Activated CD4-positive, alpha-beta T cell treated with anti-CD3 and anti-CD28 coated beads, Interleukin-2, amount 10 ng/mL, durations not matched to agents 24 days and 14 days (primary cell): ENCODE measurements at regions of chr3 and their contacts with region 1.

Region 1: DNA sequence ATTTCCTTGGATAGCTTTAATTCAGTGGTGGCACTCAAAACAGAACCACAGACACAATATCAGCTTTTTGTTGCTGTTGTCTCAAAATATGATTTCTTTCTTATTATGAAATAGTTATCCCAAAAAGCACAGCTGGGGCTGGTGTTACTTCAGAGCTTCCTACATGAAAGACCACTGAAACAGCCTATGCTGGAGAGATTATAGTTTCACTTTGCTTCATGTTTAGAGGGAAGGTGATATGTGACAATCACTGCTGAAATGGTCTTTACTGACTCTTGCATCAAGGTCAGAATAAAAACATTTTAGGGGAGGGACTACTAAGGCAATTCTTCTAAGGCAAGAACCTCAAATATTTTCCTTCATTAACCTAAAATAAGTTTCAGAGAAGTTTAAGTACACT is 190.7 kb downstream of the TNIK start:
- DNase-seq: peak; percentile 61
- H3K4me3 Mint-ChIP-seq: peak overlapping the region; percentile 56
- H3K27ac Mint-ChIP-seq: peak overlapping the region; percentile 13
- H3K4me1 Mint-ChIP-seq: peaks cover 67% of the 10 kb centered on the region
- H3K27me3 Mint-ChIP-seq: no peaks in the 10 kb centered on the region

Region 2: DNA sequence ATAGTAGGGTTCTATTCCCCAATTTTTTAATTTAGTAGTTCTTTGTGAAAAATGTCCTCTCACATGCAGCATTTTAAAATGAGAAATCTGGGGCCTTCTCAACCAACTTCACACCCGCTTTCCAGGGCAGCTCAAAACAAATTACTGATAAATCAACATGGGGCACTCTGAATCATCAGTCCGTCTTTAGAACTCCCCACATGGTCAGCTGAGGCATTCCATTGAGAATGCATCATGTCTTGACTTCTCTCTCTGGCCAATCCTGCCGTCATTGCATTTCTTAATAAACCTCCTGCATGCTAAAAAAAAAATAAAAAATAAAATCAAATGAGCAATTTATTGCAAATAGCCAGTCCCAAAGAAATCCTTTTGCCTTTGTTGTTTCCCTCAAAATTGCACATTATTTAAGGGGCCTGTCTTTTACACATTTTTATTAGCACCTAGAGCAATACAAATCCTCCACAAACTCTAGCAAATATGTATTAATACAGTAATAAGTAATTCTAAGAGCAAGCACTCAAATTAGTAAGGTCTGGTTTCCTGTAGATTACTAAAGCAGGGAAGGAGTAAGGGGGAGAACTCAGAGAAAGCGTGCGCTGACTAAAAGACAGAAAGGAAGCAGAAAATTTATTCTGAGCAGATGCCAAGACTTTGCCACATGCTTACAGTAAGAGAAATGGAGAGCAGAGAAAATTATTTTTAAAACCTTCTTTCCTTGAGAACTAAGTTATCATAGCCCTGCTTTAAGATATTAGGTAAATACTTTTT is 14.9 kb after region 1 on chr3:
- intact Hi-C with region 1: loop called (anchors 2 kb)
- DNase-seq: no peak
- H3K4me3 Mint-ChIP-seq: peak overlapping the region; percentile 23
- H3K27ac Mint-ChIP-seq: peak overlapping the region; percentile 69
- H3K4me1 Mint-ChIP-seq: peaks cover 44% of the 10 kb centered on the region
- H3K27me3 Mint-ChIP-seq: no peaks in the 10 kb centered on the region